H1 (cell line): ENCODE measurements at regions of chr12 and their contacts with region 1.

Region 1: DNA sequence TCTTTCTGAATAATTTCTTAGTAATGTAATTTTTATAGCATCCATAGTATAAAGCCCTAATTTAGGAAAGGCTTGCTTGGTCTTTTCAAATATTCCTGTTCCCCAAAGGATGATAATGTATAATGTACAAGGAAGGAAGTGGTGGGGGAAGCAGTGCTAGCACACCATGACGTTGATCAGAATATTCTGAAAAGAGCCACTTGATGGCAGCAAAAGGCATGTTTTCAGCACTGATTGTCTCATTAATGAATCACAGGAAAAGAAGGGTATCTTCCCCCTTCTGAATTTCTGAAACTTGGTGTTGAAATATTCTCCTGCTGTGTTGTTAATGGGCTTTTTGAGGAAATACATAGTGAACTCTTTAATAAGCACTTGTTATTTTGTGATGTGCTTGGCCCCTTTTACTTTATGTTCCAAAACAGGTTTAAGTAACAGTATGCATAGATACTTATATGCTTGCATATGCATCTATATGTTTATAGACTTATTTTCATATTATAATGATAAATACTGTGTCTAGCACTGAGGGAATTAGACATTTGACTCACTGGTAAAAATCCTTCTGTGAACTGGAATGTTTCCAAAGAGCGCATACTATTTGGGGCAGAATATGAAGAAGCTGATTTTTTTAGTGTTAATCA is 122.0 kb downstream of the TMEM117 start:
- DNase-seq: no peak
- H3K4me3 ChIP-seq: no peak overlapping the region
- H3K27ac ChIP-seq: no peak overlapping the region
- H3K4me1 ChIP-seq: no peaks in the 10 kb centered on the region
- H3K27me3 ChIP-seq: no peaks in the 10 kb centered on the region
- CTCF ChIP-seq: peak in 2 of 3 experiments; percentile 49 to 51; a peak in 3 of 4 replicates
- EP300 ChIP-seq: no peak
- POLR2A ChIP-seq: no peak
- RAD21 ChIP-seq: peak; percentile 77 to 83

Region 2: GRCh38 chr12:43835656-43836474 is 122.0 kb before region 1 on chr12 and contains the start of gene TMEM117:
- CTCF ChIA-PET with region 1: no interaction called
- POLR2A ChIA-PET with region 1: no interaction called
- DNase-seq: peak in 1 of 2 experiments; percentile 80
- H3K4me3 ChIP-seq: peak within 1 kb of the TSS; percentile 61 to 76 (median 69)
- H3K27ac ChIP-seq: no peak within 1 kb of the TSS
- H3K4me1 ChIP-seq: peaks cover 0 to 5% (median 2%) of the 10 kb centered on the region in 4 experiments; a peak in 2 of 7 replicates
- H3K27me3 ChIP-seq: peaks cover 0 to 25% (median 9%) of the 10 kb centered on the region in 4 experiments; a peak in 5 of 7 replicates
- CTCF ChIP-seq: no peak
- EP300 ChIP-seq: no peak
- POLR2A ChIP-seq: peak in 1 of 2 experiments; percentile 51; a peak in 1 of 3 replicates
- RAD21 ChIP-seq: no peak
- total RNA-seq, gene TMEM117: 1.4 TPM in 2 replicates

Region 3: GRCh38 chr12:43945983-43946382 is 11.9 kb before region 1 on chr12:
- CTCF ChIA-PET with region 1: interaction called, 11 read pairs
- POLR2A ChIA-PET with region 1: no interaction called
- DNase-seq: no peak
- H3K4me3 ChIP-seq: no peak overlapping the region
- H3K27ac ChIP-seq: no peak overlapping the region
- H3K4me1 ChIP-seq: no peaks in the 10 kb centered on the region
- H3K27me3 ChIP-seq: no peaks in the 10 kb centered on the region
- CTCF ChIP-seq: no peak
- EP300 ChIP-seq: no peak
- POLR2A ChIP-seq: no peak
- RAD21 ChIP-seq: no peak